ENCODE measurements at regions of chr21 and their contacts with region 1.

Region 1: GRCh38 chr21:35051287-35051818 is 2.3 kb upstream of the RUNX1 start:
- DNase-seq: peak; percentile 96
- H3K4me3 ChIP-seq: peak overlapping the region in 1 of 8 donors; percentile 79
- H3K27ac ChIP-seq: peak overlapping the region; percentile 58 to 97 (median 92)
- H3K4me1 ChIP-seq: peaks cover 17 to 63% (median 54%) of the 10 kb centered on the region in 6 donors
- H3K27me3 ChIP-seq: peaks cover 0 to 4% (median 0%) of the 10 kb centered on the region in 7 donors
- CTCF ChIP-seq: peak; percentile 45 to 85 (median 71)
- POLR2A ChIP-seq: no peak

Region 2: DNA sequence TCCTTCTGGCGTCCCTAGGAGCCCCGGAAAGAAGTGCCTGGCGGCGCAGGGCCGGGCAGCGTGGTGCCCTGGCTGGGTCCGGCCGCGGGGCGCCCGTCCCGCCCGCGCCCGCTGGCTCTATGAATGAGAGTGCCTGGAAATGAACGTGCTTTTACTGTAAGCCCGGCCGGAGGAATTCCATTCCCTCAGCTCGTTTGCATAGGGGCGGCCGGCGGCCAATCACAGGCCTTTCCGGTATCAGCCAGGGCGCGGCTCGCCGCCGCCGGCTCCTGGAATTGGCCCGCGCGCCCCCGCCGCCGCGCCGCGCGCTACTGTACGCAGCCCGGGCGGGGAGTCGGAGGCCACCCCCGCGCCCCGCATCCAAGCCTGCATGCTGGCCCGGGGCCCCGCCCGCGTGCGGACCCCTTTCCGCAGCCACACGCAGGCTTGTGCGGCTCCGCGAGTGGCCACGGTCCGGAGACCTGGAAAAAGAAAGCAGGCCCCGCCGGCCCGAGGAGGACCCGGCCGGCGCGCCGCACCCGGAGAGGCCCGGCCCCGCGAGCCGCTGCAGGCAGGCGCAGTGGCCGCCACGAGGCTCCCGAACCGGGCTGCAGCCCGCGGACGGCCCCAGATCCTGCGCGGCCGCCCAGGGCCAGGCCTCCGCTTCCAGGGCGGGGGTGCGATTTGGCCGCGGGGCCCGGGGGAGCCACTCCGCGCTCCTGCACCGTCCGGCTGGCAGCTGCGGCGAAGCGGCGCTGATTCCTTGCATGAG is 162.6 kb before region 1 on chr21:
- intact Hi-C with region 1: loop called (anchors 5 kb)
- DNase-seq: peak; percentile 96
- H3K4me3 ChIP-seq: peak overlapping the region; percentile 60 to 96 (median 88)
- H3K27ac ChIP-seq: peak overlapping the region; percentile 84 to 98 (median 95)
- H3K4me1 ChIP-seq: peaks cover 15 to 90% (median 58%) of the 10 kb centered on the region in 6 donors
- H3K27me3 ChIP-seq: peaks cover 0 to 60% (median 14%) of the 10 kb centered on the region in 7 donors
- CTCF ChIP-seq: peak in 2 of 11 experiments; percentile 16 to 37
- POLR2A ChIP-seq: peak; percentile 34 to 93 (median 69)

Region 3: DNA sequence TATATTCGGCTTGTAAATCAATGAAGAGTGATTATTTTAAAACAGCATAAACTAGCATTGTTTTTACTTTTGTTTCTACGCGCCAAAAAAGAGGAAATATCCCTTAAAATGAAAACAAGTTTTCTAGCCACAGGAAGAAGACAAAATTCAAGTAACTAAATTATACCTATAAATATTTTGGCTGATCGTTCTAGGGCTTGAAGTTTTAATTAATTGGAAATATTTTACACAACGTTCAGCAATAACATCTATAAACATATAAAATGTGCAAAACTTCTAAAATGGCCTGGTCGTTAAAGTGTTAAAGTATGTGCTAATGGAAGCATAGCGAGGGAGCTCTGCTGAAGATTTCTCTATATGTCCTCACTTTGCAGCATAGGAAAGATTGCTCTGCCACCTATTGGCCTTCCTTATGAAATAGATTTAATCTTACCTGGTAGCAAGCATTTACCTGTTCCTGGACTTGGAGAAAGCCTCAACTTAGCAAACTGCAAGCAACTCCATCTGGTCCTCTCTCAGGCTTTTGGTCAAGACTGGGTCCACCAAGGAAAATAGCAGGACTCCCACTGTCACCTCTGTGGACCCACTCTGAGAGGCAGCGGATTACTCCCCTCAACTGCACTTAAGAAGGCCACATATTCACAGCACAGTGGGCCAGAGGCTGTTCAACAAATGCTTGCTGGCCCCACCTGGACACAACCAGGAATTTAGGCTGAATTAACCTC is 349.0 kb after region 1 on chr21:
- intact Hi-C with region 1: loop called (anchors 10 kb)
- DNase-seq: no peak
- H3K4me3 ChIP-seq: no peak overlapping the region
- H3K27ac ChIP-seq: no peak overlapping the region
- H3K4me1 ChIP-seq: peaks cover 0 to 26% (median 4%) of the 10 kb centered on the region in 6 donors
- H3K27me3 ChIP-seq: peaks cover 0 to 4% (median 0%) of the 10 kb centered on the region in 7 donors
- CTCF ChIP-seq: peak in 10 of 11 experiments; percentile 19 to 52 (median 49)
- POLR2A ChIP-seq: no peak

Measured in spleen (tissue), 13 donors.